H1 (cell line): ENCODE measurements at regions of chr20 and their contacts with region 1.

Region 1: DNA sequence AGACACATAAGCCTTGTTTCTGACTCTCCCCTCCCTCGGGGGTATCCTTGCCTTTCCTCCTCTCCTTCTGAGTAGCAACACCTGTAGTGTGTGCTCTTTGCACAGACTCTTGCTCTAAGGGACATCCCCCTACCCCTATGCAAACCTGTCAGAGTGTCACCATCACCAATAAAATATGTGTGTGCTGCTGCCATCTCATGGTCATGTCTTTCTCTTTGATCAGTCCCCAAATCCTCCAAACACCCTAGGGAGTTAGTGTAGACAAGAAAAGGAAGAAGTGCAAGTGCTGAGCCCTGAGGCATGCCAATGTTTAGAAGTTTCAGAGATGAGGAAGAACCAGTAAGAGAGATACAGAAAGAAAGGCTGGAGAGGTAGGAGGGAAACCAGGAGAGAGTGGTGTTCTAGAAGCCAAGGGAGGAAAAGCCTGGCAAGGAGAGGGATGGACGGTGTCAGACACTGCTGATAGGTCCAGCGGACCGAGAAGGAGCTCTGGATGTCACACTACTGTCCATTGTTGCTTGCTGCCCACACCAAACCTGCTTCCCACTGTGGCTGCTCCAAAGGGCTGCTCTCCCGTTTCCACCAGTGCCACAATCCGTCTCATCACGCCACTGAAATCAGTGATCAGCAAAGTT is 16.4 kb downstream of the TRMT6 start:
- DNase-seq: no peak
- H3K4me3 ChIP-seq: no peak overlapping the region
- H3K27ac ChIP-seq: no peak overlapping the region
- H3K4me1 ChIP-seq: no peaks in the 10 kb centered on the region
- H3K27me3 ChIP-seq: no peaks in the 10 kb centered on the region
- CTCF ChIP-seq: peak in 2 of 3 experiments; percentile 26 to 44; a peak in 2 of 4 replicates
- EP300 ChIP-seq: no peak
- POLR2A ChIP-seq: no peak
- RAD21 ChIP-seq: peak; percentile 59 to 73

Region 2: DNA sequence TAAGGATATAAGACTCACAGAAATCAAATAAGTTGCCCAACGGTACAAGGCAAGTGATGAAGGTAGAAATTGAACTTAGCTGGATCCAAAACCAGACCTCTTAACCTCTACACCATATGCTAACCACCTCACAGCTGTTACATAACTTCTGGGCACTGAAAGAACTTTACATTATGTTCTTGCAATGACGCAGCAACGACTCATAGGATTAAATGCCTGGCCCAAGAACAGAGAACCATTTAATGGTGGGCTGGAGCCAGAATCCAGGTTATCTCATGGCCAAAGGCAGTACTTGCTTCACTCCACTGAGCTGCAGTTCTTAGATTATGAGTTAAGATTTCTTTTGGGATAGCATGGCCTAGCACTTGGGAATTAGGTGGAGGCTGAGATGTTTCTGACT is 12.0 kb after region 1 on chr20:
- CTCF ChIA-PET with region 1: interaction called, 3 read pairs
- POLR2A ChIA-PET with region 1: interaction called, 10 read pairs
- DNase-seq: no peak
- H3K4me3 ChIP-seq: no peak overlapping the region
- H3K27ac ChIP-seq: no peak overlapping the region
- H3K4me1 ChIP-seq: peaks cover 0 to 3% (median 1%) of the 10 kb centered on the region in 4 experiments; a peak in 2 of 7 replicates
- H3K27me3 ChIP-seq: no peaks in the 10 kb centered on the region
- CTCF ChIP-seq: no peak
- EP300 ChIP-seq: no peak
- POLR2A ChIP-seq: no peak
- RAD21 ChIP-seq: no peak